Astrocyte of the cerebellum (primary cell): ENCODE measurements at regions of chr3 and their contacts with region 1.

Region 1: GRCh38 chr3:113287803-113288648 is 76.7 kb downstream of the BOC start:
- DNase-seq: peak; percentile 67
- H3K4me3 ChIP-seq: no peak overlapping the region
- CTCF ChIP-seq: peak; percentile 100

Region 2: DNA sequence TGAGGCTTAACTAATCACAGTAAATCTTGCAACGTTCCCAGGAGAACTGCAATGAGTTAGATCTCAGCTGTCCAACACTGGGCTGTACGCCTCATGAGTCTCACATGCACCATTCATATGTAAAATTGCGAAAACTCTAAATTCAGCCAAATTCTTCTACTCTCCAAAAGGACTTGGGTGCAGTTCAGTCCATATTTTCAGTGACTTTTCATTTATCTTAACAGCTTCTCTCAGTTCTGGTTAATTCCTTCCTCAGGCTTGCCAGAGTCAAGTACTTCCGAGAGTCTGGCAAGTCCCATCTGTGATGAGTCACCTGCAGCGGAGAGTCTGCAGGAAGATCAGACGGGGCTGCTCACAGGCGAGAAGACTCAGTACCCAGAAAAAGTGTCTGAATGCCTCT is 658.6 kb before region 1 on chr3:
- in situ Hi-C with region 1: no loop called
- DNase-seq: peak; percentile 92
- H3K4me3 ChIP-seq: no peak overlapping the region
- CTCF ChIP-seq: no peak

Region 3: DNA sequence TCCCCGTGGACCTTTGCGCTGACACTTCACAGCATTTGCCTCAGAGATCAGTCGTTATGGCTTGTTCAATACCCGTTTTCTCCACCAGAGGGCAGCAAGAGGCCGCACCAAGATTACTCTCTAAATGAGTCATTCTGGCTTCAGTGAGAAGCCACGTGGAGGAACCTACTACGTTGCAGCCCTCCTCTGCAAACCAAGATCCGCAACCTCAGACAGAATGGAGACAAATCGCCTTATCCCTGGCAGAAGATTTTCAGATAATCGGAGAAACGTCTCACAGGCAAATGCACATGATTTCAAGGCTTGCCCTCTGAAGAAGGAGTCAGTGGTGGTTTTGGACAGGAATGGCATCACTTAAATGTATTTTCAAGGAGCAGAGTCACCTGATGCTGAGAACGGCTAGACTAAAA is 236.7 kb before region 1 on chr3:
- in situ Hi-C with region 1: loop called (anchors 5 kb)
- DNase-seq: peak; percentile 65
- H3K4me3 ChIP-seq: no peak overlapping the region
- CTCF ChIP-seq: peak; percentile 85